Transverse colon (tissue), 4 donors: ENCODE measurements at regions of chr4 and their contacts with region 1.

Region 1: GRCh38 chr4:38400946-38401345 is 263.1 kb upstream of the KLF3 start:
- DNase-seq: no peak
- H3K4me3 ChIP-seq: no peak overlapping the region
- H3K27ac ChIP-seq: no peak overlapping the region
- H3K4me1 ChIP-seq: no peaks in the 10 kb centered on the region
- H3K27me3 ChIP-seq: no peaks in the 10 kb centered on the region
- CTCF ChIP-seq: no peak
- EP300 ChIP-seq: no peak
- POLR2A ChIP-seq: no peak

Region 2: DNA sequence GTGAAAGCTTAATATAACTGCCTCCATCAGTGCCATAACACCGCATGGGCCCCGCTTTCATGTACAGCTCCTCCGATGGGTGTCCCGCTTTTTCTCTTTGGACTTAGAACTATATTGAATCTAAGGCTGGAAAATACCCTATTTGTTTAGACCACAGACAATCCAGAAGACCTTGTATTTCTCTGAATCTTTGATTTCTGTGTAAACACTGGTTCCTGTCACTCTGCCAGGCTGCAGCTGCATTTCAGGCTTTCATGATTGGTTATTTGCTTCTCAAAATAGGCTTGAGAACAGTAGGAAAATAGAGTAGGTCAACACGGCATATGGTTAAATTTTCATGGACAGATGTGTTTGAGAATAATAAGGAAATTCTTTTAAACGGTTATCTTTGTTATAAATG is 1076.4 kb before region 1 on chr4:
- in situ Hi-C with region 1: no loop called
- intact Hi-C with region 1: no loop called
- DNase-seq: no peak
- H3K4me3 ChIP-seq: no peak overlapping the region
- H3K27ac ChIP-seq: no peak overlapping the region
- H3K4me1 ChIP-seq: no peaks in the 10 kb centered on the region
- H3K27me3 ChIP-seq: no peaks in the 10 kb centered on the region
- CTCF ChIP-seq: no peak
- EP300 ChIP-seq: no peak
- POLR2A ChIP-seq: no peak

Region 3: GRCh38 chr4:38411092-38411491 is 10.1 kb after region 1 on chr4:
- in situ Hi-C with region 1: no loop called
- intact Hi-C with region 1: loop called (anchors 1 kb)
- DNase-seq: peak; percentile 21
- H3K4me3 ChIP-seq: no peak overlapping the region
- H3K27ac ChIP-seq: no peak overlapping the region
- H3K4me1 ChIP-seq: peaks cover 0 to 25% (median 14%) of the 10 kb centered on the region in 4 donors
- H3K27me3 ChIP-seq: no peaks in the 10 kb centered on the region
- CTCF ChIP-seq: no peak
- EP300 ChIP-seq: no peak
- POLR2A ChIP-seq: no peak